ENCODE measurements at regions of chr7 and their contacts with region 1.

Region 1: GRCh38 chr7:158824028-158824427 is 5.3 kb downstream of the ESYT2 start:
- DNase-seq: peak in 9 of 10 donors; percentile 39 to 83 (median 71)
- ATAC-seq: peak; percentile 57 to 79
- H3K4me3 Mint-ChIP-seq: peak overlapping the region; percentile 54 to 84 (median 68)
- H3K27ac Mint-ChIP-seq: peak overlapping the region; percentile 87 to 96 (median 92)
- H3K4me1 Mint-ChIP-seq: peaks cover 26 to 79% (median 69%) of the 10 kb centered on the region in 4 donors
- H3K27me3 Mint-ChIP-seq: no peaks in the 10 kb centered on the region

Region 2: GRCh38 chr7:158782761-158783401 is 41.1 kb before region 1 on chr7:
- POLR2A ChIA-PET with region 1: interaction called, 10 read pairs
- DNase-seq: peak in 2 of 10 donors; percentile 4 to 15
- ATAC-seq: peak; percentile 24
- H3K4me3 Mint-ChIP-seq: no peak overlapping the region
- H3K27ac Mint-ChIP-seq: no peak overlapping the region
- H3K4me1 Mint-ChIP-seq: peaks cover 1 to 13% (median 8%) of the 10 kb centered on the region in 4 donors
- H3K27me3 Mint-ChIP-seq: no peaks in the 10 kb centered on the region

Region 3: DNA sequence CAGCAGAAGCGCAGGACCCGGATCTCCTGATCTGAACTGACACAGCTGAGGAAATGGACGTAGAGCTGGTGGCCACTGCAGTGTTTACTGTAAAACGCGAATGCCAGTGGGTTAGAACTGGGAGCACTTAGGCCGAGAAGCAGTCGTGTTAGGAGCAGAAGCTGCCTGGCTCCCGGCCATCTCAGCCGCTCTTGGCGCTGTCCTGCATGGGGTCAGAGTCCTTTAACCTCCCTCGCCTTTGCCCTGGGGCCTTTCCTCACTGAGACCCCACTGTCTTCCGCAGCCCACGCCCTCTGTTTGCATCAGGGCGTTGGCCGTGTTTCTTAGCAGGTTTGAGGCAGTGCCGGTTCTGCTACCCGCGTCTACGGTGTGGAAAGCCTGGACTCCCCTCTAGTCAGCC is 56.9 kb after region 1 on chr7:
- POLR2A ChIA-PET with region 1: no interaction called
- DNase-seq: no peak
- ATAC-seq: no peak
- H3K4me3 Mint-ChIP-seq: no peak overlapping the region
- H3K27ac Mint-ChIP-seq: no peak overlapping the region
- H3K4me1 Mint-ChIP-seq: peaks cover 0 to 7% (median 2%) of the 10 kb centered on the region in 4 donors
- H3K27me3 Mint-ChIP-seq: no peaks in the 10 kb centered on the region

Region 4: DNA sequence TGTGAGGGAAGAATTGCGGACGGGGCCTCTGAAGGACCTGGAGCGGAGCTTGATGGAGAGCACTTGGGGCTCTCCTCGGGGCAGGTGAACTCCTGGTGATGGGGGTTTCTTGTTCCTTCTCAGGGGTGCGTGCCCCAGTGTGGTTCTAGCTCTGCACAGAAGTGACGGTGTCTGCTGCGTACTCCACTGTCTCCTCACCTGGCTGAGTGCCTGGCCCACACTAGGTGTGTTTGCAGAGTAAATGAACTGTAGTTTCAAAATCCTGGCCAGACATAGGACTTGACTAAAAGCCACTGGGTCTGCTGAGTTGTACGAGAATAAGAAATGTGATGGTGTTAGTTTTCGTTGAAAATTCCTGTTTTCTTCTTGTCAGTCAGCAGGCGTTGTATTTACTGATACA is 67.9 kb after region 1 on chr7:
- POLR2A ChIA-PET with region 1: no interaction called
- DNase-seq: no peak
- ATAC-seq: no peak
- H3K4me3 Mint-ChIP-seq: no peak overlapping the region
- H3K27ac Mint-ChIP-seq: peak overlapping the region in 1 of 10 donors; percentile 11
- H3K4me1 Mint-ChIP-seq: peaks cover 0 to 2% (median 0%) of the 10 kb centered on the region in 4 donors
- H3K27me3 Mint-ChIP-seq: no peaks in the 10 kb centered on the region